CD4-positive, alpha-beta memory T cell (primary cell): ENCODE measurements at regions of chr5 and their contacts with region 1.

Region 1: GRCh38 chr5:5421961-5422818 is at the start of gene ICE1:
- DNase-seq: peak; percentile 97 to 98 (median 97)
- H3K4me3 ChIP-seq: peak within 1 kb of the TSS; percentile 85 to 90
- H3K4me3 Mint-ChIP-seq: peak within 1 kb of the TSS in 7 of 8 donors; percentile 92 to 97 (median 94)
- H3K27ac ChIP-seq: peak within 1 kb of the TSS; percentile 91
- H3K27ac Mint-ChIP-seq: peak within 1 kb of the TSS in 6 of 7 donors; percentile 98 to 99 (median 98)
- H3K4me1 ChIP-seq: peaks cover 53% of the 10 kb centered on the region
- H3K4me1 Mint-ChIP-seq: peaks cover 13 to 20% (median 16%) of the 10 kb centered on the region in 4 donors
- H3K27me3 ChIP-seq: no peaks in the 10 kb centered on the region
- H3K27me3 Mint-ChIP-seq: no peaks in the 10 kb centered on the region
- total RNA-seq, gene ICE1: 48.3 to 52.1 TPM

Region 2: DNA sequence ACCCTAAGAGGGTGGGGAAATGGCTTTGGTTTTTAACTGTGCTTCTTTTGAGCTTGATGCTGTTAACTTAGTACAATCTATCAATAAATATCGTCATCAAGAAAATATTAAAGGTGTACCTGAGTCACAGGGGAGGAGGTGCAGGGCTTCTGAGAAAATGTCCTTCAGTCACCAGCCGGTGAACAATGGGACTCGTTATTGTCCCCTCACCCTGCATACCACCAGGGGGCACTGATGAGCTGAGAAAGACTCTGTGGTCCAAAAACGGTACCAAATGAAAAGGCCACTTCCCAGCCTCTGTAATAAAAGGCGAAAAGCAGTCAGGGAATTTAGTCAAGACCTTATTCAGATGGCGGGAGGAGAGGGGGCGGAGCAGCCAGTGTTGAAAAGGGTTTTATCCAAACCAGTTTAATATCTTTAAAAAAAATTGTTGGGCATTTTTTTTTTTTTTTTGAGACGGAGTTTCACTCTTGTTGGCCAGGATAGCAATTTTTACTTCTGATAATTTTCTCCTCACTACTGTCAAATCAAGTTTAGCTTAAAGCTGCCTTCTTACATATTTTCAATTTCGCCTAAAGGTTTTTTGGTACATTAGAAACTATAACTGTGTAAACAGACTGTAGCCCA is 554.0 kb before region 1 on chr5:
- CTCF ChIA-PET with region 1: no interaction called
- POLR2A ChIA-PET with region 1: no interaction called
- intact Hi-C with region 1: loop called (anchors 10 kb)
- DNase-seq: peak in 1 of 5 donors; percentile 6
- H3K4me3 ChIP-seq: no peak overlapping the region
- H3K4me3 Mint-ChIP-seq: no peak overlapping the region
- H3K27ac ChIP-seq: no peak overlapping the region
- H3K27ac Mint-ChIP-seq: no peak overlapping the region
- H3K4me1 ChIP-seq: no peaks in the 10 kb centered on the region
- H3K4me1 Mint-ChIP-seq: no peaks in the 10 kb centered on the region
- H3K27me3 ChIP-seq: no peaks in the 10 kb centered on the region
- H3K27me3 Mint-ChIP-seq: no peaks in the 10 kb centered on the region

Region 3: GRCh38 chr5:5235685-5236084 is 186.5 kb before region 1 on chr5:
- CTCF ChIA-PET with region 1: no interaction called
- POLR2A ChIA-PET with region 1: no interaction called
- intact Hi-C with region 1: no loop called
- DNase-seq: no peak
- H3K4me3 ChIP-seq: no peak overlapping the region
- H3K4me3 Mint-ChIP-seq: no peak overlapping the region
- H3K27ac ChIP-seq: no peak overlapping the region
- H3K27ac Mint-ChIP-seq: no peak overlapping the region
- H3K4me1 ChIP-seq: no peaks in the 10 kb centered on the region
- H3K4me1 Mint-ChIP-seq: no peaks in the 10 kb centered on the region
- H3K27me3 ChIP-seq: no peaks in the 10 kb centered on the region
- H3K27me3 Mint-ChIP-seq: peaks cover 0 to 1% of the 10 kb centered on the region in 2 donors

Region 4: GRCh38 chr5:5523066-5523505 is 100.9 kb after region 1 on chr5:
- CTCF ChIA-PET with region 1: no interaction called
- POLR2A ChIA-PET with region 1: interaction called, 3 read pairs
- intact Hi-C with region 1: loop called (anchors 1 kb)
- DNase-seq: peak; percentile 61 to 65 (median 64)
- H3K4me3 ChIP-seq: peak overlapping the region in 1 of 2 donors; percentile 28
- H3K4me3 Mint-ChIP-seq: peak overlapping the region; percentile 36 to 82 (median 73)
- H3K27ac ChIP-seq: no peak overlapping the region
- H3K27ac Mint-ChIP-seq: peak overlapping the region; percentile 15 to 93 (median 85)
- H3K4me1 ChIP-seq: peaks cover 9% of the 10 kb centered on the region
- H3K4me1 Mint-ChIP-seq: peaks cover 11 to 16% (median 13%) of the 10 kb centered on the region in 4 donors
- H3K27me3 ChIP-seq: no peaks in the 10 kb centered on the region
- H3K27me3 Mint-ChIP-seq: no peaks in the 10 kb centered on the region

Region 5: GRCh38 chr5:6377905-6378765 is 955.9 kb after region 1 on chr5 and contains the start of gene MED10:
- CTCF ChIA-PET with region 1: no interaction called
- POLR2A ChIA-PET with region 1: interaction called, 10 read pairs
- intact Hi-C with region 1: loop called (anchors 1 kb)
- DNase-seq: peak; percentile 91 to 95 (median 92)
- H3K4me3 ChIP-seq: peak within 1 kb of the TSS; percentile 89 to 90
- H3K4me3 Mint-ChIP-seq: peak within 1 kb of the TSS; percentile 96 to 100 (median 99)
- H3K27ac ChIP-seq: peak within 1 kb of the TSS; percentile 86
- H3K27ac Mint-ChIP-seq: peak within 1 kb of the TSS; percentile 95 to 100 (median 98)
- H3K4me1 ChIP-seq: peaks cover 34% of the 10 kb centered on the region
- H3K4me1 Mint-ChIP-seq: peaks cover 35 to 62% (median 49%) of the 10 kb centered on the region in 4 donors
- H3K27me3 ChIP-seq: no peaks in the 10 kb centered on the region
- H3K27me3 Mint-ChIP-seq: no peaks in the 10 kb centered on the region
- total RNA-seq, gene MED10: 61.2 to 64.7 TPM

Region 6: DNA sequence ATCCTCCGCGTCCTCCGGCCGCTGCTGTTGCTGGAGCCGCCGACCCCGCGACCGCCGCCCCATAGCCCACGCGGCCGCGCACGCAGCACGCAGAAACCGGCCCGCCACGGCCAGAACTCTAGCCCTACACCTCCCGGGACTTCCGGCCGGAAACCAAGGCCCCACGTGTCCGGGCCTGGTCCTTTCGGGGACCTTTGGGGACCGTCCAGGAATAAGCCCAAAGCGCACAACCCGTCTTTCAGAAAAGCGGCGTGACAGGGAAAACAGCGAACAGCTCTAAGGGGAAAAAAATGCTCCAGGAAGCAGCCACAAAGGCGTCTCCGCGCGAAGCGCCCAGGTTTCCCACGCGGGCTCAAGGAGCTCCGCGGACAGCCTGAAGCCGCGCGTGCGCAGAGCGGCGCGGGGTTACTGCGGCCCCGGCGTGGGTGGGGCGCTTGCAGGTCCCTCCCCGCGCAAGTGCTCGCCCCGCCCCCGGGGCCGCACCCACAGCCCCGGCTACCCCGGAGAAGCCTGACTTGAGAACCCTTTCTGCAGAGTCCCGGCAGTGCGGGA is 1210.8 kb after region 1 on chr5 and contains the starts of genes NSUN2 and SRD5A1:
- CTCF ChIA-PET with region 1: interaction called, 6 read pairs
- POLR2A ChIA-PET with region 1: interaction called, 16 read pairs
- intact Hi-C with region 1: loop called (anchors 1 kb)
- DNase-seq: peak; percentile 92 to 98 (median 95)
- H3K4me3 ChIP-seq: peak within 1 kb of the TSS; percentile 66 to 94
- H3K4me3 Mint-ChIP-seq: peak within 1 kb of the TSS; percentile 84 to 99 (median 93)
- H3K27ac ChIP-seq: peak within 1 kb of the TSS; percentile 87
- H3K27ac Mint-ChIP-seq: peak within 1 kb of the TSS; percentile 92 to 99 (median 99)
- H3K4me1 ChIP-seq: peaks cover 36% of the 10 kb centered on the region
- H3K4me1 Mint-ChIP-seq: peaks cover 30 to 60% (median 39%) of the 10 kb centered on the region in 4 donors
- H3K27me3 ChIP-seq: no peaks in the 10 kb centered on the region
- H3K27me3 Mint-ChIP-seq: no peaks in the 10 kb centered on the region
- total RNA-seq, gene NSUN2: 78.0 to 81.6 TPM
- total RNA-seq, gene SRD5A1: 7.8 to 9.2 TPM

Region 7: DNA sequence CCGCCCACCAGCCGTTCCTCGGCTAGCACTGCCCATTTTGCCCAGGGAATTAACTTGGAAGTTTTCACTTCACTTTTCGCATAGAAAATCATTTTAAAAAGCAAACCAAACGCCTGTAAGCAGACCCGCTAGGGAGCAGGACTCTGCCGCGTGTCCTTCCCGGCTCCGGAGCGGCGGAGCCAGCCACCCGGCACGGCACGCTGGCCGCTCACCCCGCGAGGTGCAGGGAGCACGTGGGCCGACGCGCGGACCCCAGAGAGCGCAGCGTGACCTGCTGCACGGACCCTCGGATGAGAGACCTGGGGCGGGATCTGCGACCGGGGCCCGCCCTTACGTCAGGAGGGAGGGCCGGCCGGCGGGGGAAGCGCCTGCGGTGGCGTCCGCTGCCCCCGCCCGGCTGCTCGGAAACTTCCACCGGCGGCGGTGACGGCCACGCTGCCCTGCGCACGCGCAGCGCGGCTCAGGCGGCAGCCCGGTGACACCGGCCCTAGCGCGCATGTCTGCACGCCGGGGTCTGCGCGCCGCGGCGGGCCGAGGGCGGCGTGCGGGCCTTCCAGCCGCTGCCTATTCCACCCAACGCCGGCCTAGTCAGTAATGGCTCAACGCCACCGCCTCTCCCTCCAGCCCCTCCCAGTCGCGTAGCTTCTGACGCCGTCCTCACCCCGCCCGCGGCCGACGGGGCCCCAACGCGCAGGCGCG is 1290.5 kb after region 1 on chr5:
- CTCF ChIA-PET with region 1: no interaction called
- POLR2A ChIA-PET with region 1: interaction called, 12 read pairs
- intact Hi-C with region 1: loop called (anchors 1 kb)
- DNase-seq: peak; percentile 96 to 99 (median 99)
- H3K4me3 ChIP-seq: peak overlapping the region; percentile 70 to 81
- H3K4me3 Mint-ChIP-seq: peak overlapping the region; percentile 88 to 91 (median 90)
- H3K27ac ChIP-seq: peak overlapping the region; percentile 86
- H3K27ac Mint-ChIP-seq: peak overlapping the region; percentile 92 to 95 (median 94)
- H3K4me1 ChIP-seq: peaks cover 31% of the 10 kb centered on the region
- H3K4me1 Mint-ChIP-seq: peaks cover 26 to 39% (median 33%) of the 10 kb centered on the region in 4 donors
- H3K27me3 ChIP-seq: no peaks in the 10 kb centered on the region
- H3K27me3 Mint-ChIP-seq: no peaks in the 10 kb centered on the region